Panc1 (cell line): ENCODE measurements at regions of chr2 and their contacts with region 1.

Region 1: GRCh38 chr2:47250630-47251403 is 95.7 kb upstream of the STPG4 start:
- DNase-seq: no peak
- ATAC-seq: peak; percentile 79
- H3K4me3 ChIP-seq: no peak overlapping the region
- H3K27ac ChIP-seq: peak overlapping the region; percentile 44
- H3K4me1 ChIP-seq: peaks cover 22% of the 10 kb centered on the region
- H3K27me3 ChIP-seq: no peaks in the 10 kb centered on the region
- CTCF ChIP-seq: no peak

Region 2: DNA sequence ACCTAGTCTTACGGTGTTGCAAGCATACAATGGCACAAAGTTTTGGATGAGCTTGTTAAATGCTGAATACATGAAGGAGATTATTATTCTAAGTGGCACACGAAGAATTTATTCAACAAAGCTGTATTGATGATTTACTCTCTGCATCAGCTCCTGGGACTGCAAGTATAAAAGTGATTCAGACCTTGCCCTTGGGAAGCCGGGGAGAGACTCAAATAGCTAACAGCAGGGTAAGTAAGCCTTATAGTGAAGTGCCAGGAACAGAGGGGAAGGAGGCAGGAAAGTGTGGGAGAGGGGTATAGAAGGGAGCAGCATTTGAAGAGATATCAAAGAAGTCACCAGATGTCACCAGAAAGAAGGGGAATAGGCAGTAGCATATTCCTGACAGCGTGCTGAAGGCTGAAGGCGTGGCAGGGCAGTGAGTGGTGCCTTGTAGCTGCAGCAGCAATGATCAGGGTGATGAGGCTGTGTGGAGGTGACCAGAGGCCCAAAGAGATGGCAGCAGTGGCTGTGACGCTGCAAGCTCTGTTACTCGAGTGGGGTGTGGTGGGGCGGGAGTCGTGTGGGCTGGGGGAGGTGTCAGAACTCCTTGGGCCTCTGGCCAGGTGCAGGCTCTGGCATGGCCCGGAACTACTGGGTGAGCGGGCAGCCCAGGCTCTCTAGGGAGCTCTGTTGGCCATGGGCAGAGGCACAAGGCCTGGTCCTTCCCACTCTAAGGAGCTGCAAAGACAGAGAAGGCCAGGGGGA is 450.4 kb before region 1 on chr2:
- CTCF ChIA-PET with region 1: no interaction called
- POLR2A ChIA-PET with region 1: interaction called, 11 read pairs
- in situ Hi-C with region 1: no loop called
- intact Hi-C with region 1: no loop called
- DNase-seq: no peak
- ATAC-seq: no peak
- H3K4me3 ChIP-seq: no peak overlapping the region
- H3K27ac ChIP-seq: no peak overlapping the region
- H3K4me1 ChIP-seq: no peaks in the 10 kb centered on the region
- H3K27me3 ChIP-seq: no peaks in the 10 kb centered on the region
- CTCF ChIP-seq: no peak

Region 3: DNA sequence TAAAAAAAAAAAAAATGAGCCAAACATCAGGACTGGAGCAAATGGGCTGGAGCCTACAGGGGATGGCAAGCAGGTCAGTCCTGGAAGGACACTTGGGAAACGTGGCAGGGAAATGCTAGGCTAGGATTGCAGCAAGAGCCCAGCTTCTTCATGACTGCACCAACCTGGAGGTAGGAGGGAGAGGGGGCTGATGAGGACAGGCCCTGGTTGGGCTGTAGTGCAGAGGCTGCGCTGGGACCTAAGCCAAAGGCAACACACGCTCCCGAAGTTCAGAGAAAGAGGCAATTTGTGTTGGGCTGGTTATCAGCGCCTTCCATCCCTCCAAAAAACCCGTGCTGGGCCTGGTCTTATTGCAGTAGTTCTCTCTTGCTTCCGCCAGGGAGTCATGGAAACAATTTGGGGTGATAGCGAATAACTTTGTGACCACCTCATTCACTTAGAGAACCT is 13.4 kb before region 1 on chr2:
- CTCF ChIA-PET with region 1: no interaction called
- POLR2A ChIA-PET with region 1: no interaction called
- in situ Hi-C with region 1: no loop called
- intact Hi-C with region 1: no loop called
- DNase-seq: no peak
- ATAC-seq: no peak
- H3K4me3 ChIP-seq: no peak overlapping the region
- H3K27ac ChIP-seq: no peak overlapping the region
- H3K4me1 ChIP-seq: peaks cover 20% of the 10 kb centered on the region
- H3K27me3 ChIP-seq: no peaks in the 10 kb centered on the region
- CTCF ChIP-seq: no peak

Region 4: GRCh38 chr2:48233005-48233404 is 982.2 kb after region 1 on chr2:
- CTCF ChIA-PET with region 1: no interaction called
- POLR2A ChIA-PET with region 1: no interaction called
- in situ Hi-C with region 1: no loop called
- intact Hi-C with region 1: no loop called
- DNase-seq: no peak
- ATAC-seq: no peak
- H3K4me3 ChIP-seq: no peak overlapping the region
- H3K27ac ChIP-seq: no peak overlapping the region
- H3K4me1 ChIP-seq: no peaks in the 10 kb centered on the region
- H3K27me3 ChIP-seq: no peaks in the 10 kb centered on the region
- CTCF ChIP-seq: no peak